ENCODE measurements at regions of chr3 and their contacts with region 1.

Region 1: GRCh38 chr3:116770815-116771450 is 61.4 kb downstream of the TUSC7 start:
- DNase-seq: peak; percentile 88
- ATAC-seq: peak; percentile 88
- H3K4me3 ChIP-seq: no peak overlapping the region
- H3K27ac ChIP-seq: no peak overlapping the region
- H3K4me1 ChIP-seq: no peaks in the 10 kb centered on the region
- H3K27me3 ChIP-seq: no peaks in the 10 kb centered on the region
- CTCF ChIP-seq: peak; percentile 99

Region 2: GRCh38 chr3:117005274-117005673 is 234.3 kb after region 1 on chr3:
- CTCF ChIA-PET with region 1: interaction called, 11 read pairs
- POLR2A ChIA-PET with region 1: no interaction called
- intact Hi-C with region 1: no loop called
- DNase-seq: no peak
- ATAC-seq: no peak
- H3K4me3 ChIP-seq: no peak overlapping the region
- H3K27ac ChIP-seq: no peak overlapping the region
- H3K4me1 ChIP-seq: no peaks in the 10 kb centered on the region
- H3K27me3 ChIP-seq: no peaks in the 10 kb centered on the region
- CTCF ChIP-seq: no peak

Region 3: DNA sequence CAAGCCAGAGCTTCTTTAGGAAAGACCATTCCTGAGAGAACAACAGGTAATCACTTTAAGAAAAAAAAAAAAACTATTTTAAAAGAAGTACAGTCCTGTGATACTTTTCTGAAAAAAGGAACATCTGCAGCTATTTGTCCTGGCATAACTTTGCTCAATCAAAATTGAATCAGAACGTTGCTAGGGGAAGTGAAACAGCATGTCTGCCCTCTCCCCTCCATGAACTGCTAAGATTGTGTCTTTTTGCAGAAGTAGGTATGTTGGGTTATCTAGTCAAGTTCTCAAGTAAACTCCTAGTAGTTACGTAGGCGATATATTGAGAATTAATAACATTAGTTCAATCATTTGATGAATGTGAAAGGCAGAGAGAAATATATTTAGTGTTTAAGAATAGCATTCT is 951.9 kb after region 1 on chr3:
- CTCF ChIA-PET with region 1: no interaction called
- POLR2A ChIA-PET with region 1: no interaction called
- intact Hi-C with region 1: loop called (anchors 5 kb)
- DNase-seq: no peak
- ATAC-seq: no peak
- H3K4me3 ChIP-seq: no peak overlapping the region
- H3K27ac ChIP-seq: no peak overlapping the region
- H3K4me1 ChIP-seq: no peaks in the 10 kb centered on the region
- H3K27me3 ChIP-seq: no peaks in the 10 kb centered on the region
- CTCF ChIP-seq: no peak